Mammary epithelial cell (primary cell): ENCODE measurements at regions of chr16 and their contacts with region 1.

Region 1: GRCh38 chr16:15954814-15955151 is 5.4 kb downstream of the ABCC1 start:
- DNase-seq: no peak
- H3K4me3 ChIP-seq: no peak overlapping the region
- H3K27ac ChIP-seq: no peak overlapping the region
- H3K4me1 ChIP-seq: peaks cover 10% of the 10 kb centered on the region
- H3K27me3 ChIP-seq: no peaks in the 10 kb centered on the region
- CTCF ChIP-seq: no peak

Region 2: DNA sequence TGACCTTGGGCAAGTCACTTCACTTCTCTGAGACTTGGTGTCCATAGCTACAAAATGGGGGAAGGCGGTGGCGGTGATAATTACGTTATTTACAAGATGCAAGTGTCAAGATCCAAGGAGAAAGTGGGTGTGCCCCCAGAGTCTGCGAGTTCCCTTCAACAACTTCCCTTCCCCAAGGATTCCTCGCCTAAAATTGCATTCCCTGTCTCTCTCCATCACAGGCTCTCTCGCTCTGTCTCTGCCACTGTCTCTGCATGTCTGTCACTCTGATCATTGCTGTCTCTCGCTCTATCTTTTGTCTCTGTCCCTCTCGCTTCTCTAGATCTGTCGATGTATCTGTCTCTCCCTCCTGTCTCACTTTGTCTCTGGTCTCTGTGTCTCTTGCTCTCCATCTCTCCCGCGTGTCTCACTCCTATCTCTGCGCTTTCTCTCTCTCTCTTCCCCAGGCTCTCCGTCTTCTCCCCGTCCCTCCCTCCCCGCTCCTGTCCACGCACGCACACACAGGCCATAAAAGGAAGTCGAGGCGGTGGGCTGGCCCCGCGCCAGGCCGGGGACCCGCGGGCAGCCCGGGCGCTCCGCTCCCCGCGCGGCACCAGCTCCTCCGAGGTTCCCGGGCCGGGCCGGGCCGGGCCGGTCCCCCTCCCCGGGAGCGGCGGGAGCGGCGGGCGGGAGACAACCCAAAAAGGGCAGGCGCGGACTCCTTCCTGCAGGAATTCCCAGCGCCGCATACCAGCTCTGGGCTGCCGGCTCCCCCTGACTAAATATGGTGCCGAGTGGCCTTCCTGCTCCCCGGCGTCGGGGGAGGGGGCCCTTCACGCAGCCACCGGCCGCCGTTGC is 96.8 kb before region 1 on chr16:
- CTCF ChIA-PET with region 1: no interaction called
- dilution Hi-C with region 1: loop called (anchors 5 kb)
- in situ Hi-C with region 1: no loop called
- intact Hi-C with region 1: no loop called
- DNase-seq: no peak
- H3K4me3 ChIP-seq: peak overlapping the region in 2 of 3 experiments; percentile 24 to 31
- H3K27ac ChIP-seq: no peak overlapping the region
- H3K4me1 ChIP-seq: peaks cover 7% of the 10 kb centered on the region
- H3K27me3 ChIP-seq: peaks cover 29% of the 10 kb centered on the region
- CTCF ChIP-seq: no peak

Region 3: DNA sequence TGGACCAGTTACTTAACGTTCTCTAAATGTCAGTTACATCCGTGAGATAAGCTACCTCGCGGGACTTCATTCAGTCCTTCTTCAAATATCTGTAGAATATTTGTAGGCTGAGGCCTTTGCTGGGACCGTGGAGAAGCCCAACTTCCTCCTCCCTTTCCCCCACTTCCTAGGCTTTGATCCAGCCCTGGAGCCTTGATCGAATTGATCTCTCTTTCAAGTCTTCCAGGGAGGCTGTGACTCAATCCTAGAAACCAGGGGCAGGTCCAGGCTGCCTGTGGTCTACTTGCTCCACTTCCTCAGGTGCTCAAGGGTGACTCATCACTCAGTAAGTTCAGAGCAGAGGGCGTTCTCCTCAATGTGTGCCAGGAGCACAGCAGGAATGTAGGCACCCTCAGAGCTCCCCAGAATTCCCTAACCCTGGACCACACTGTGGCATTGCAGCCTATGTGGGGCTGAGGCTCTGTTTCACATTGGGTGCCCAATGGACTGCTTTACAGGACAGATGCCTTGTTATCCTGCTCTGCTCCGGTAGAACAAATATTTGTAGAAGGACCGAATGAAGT is 55.2 kb before region 1 on chr16:
- CTCF ChIA-PET with region 1: no interaction called
- dilution Hi-C with region 1: loop called (anchors 5 kb)
- in situ Hi-C with region 1: no loop called
- intact Hi-C with region 1: no loop called
- DNase-seq: peak; percentile 98
- H3K4me3 ChIP-seq: no peak overlapping the region
- H3K27ac ChIP-seq: peak overlapping the region; percentile 98
- H3K4me1 ChIP-seq: peaks cover 30% of the 10 kb centered on the region
- H3K27me3 ChIP-seq: no peaks in the 10 kb centered on the region
- CTCF ChIP-seq: no peak

Region 4: DNA sequence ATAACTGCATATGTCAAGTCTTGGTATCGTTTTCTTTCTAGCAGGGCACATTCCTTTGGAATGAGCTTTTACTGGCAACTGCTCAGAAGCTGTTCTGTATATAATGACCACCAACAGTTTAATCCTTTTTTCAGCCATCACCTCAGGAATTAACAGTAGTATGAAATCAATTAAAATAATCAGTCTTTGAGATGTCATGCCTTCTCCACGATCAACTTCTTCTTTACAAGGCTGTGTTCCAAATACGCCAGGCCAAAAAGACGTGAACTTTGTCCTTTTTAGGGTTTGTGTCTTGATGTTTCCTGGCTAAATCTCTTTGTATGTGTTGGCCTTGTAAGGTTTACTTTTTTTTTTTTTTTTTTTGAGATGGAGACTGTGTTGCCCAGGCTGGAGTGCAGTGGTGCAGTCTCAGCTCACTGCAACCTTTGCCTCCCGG is 49.5 kb after region 1 on chr16:
- CTCF ChIA-PET with region 1: no interaction called
- dilution Hi-C with region 1: loop called (anchors 5 kb)
- in situ Hi-C with region 1: no loop called
- intact Hi-C with region 1: no loop called
- DNase-seq: no peak
- H3K4me3 ChIP-seq: no peak overlapping the region
- H3K27ac ChIP-seq: no peak overlapping the region
- H3K4me1 ChIP-seq: no peaks in the 10 kb centered on the region
- H3K27me3 ChIP-seq: no peaks in the 10 kb centered on the region
- CTCF ChIP-seq: no peak

Region 5: DNA sequence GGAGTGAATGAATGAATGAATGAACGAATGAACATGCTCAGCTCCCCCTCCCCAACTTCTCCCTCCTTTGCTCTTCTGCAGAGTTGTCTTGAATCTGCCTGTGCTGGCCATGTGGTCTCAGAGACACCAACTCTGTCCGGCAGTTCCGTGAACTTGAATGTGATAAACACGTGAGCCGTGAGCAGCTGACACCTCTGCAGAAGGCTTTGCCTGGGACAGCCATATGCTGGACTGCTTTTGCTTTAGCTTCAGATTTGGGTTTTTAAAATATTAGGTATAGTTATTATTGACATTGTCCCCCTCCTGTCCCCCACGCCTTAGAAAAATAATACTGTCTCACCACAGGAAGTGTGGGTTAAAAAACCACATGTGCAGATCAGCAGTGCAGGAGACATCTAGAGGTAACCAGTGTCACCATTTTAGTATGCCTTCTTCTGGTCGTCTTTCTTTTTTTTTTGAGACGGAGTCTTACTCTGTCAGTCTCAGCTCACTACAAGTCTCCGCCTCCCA is 78.5 kb after region 1 on chr16:
- CTCF ChIA-PET with region 1: no interaction called
- dilution Hi-C with region 1: loop called (anchors 5 kb)
- in situ Hi-C with region 1: no loop called
- intact Hi-C with region 1: no loop called
- DNase-seq: no peak
- H3K4me3 ChIP-seq: no peak overlapping the region
- H3K27ac ChIP-seq: no peak overlapping the region
- H3K4me1 ChIP-seq: no peaks in the 10 kb centered on the region
- H3K27me3 ChIP-seq: no peaks in the 10 kb centered on the region
- CTCF ChIP-seq: no peak